ENCODE measurements at regions of chr9 and their contacts with region 1.

Region 1: GRCh38 chr9:4366591-4367330 is 66.9 kb upstream of the GLIS3 start:
- DNase-seq: peak; percentile 48
- ATAC-seq: no peak
- H3K4me3 Mint-ChIP-seq: no peak overlapping the region
- H3K27ac Mint-ChIP-seq: no peak overlapping the region
- H3K4me1 Mint-ChIP-seq: peaks cover 3% of the 10 kb centered on the region
- H3K27me3 Mint-ChIP-seq: peaks cover 2% of the 10 kb centered on the region
- CTCF ChIP-seq: peak; percentile 75

Region 2: GRCh38 chr9:3732077-3733038 is 634.4 kb before region 1 on chr9:
- CTCF ChIA-PET with region 1: interaction called, 14 read pairs
- POLR2A ChIA-PET with region 1: no interaction called
- intact Hi-C with region 1: loop called (anchors 10 kb)
- DNase-seq: peak; percentile 47
- ATAC-seq: peak; percentile 97
- H3K4me3 Mint-ChIP-seq: peak overlapping the region; percentile 28
- H3K27ac Mint-ChIP-seq: peak overlapping the region; percentile 23
- H3K4me1 Mint-ChIP-seq: peaks cover 22% of the 10 kb centered on the region
- H3K27me3 Mint-ChIP-seq: peaks cover 1% of the 10 kb centered on the region
- CTCF ChIP-seq: peak; percentile 71

Region 3: DNA sequence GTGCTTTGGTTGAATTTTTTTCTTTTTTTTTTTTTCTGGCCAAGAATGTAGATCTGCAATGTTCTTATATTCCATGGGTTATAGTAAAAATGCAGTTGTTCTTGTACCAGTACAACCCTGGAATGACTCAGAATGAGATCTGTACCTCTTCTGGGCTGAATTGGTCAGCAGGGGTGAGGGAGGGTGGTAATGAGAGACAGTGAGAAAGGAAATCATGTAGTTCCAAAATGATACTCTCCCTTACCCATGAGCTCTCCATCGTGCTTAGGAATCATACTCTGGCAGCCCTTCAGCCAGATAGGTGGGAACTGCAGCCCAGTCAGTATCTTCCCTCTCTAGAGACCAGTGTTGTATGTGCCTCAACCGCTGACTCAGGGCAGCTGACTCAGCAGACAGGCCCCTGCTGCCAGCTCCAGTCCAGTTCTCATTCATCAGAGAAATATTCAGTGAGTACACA is 64.8 kb before region 1 on chr9:
- CTCF ChIA-PET with region 1: interaction called, 11 read pairs
- POLR2A ChIA-PET with region 1: no interaction called
- intact Hi-C with region 1: no loop called
- DNase-seq: peak; percentile 31
- ATAC-seq: no peak
- H3K4me3 Mint-ChIP-seq: no peak overlapping the region
- H3K27ac Mint-ChIP-seq: no peak overlapping the region
- H3K4me1 Mint-ChIP-seq: peaks cover 55% of the 10 kb centered on the region
- H3K27me3 Mint-ChIP-seq: peaks cover 35% of the 10 kb centered on the region
- CTCF ChIP-seq: no peak

Region 4: GRCh38 chr9:4327504-4328191 is 39.1 kb before region 1 on chr9:
- CTCF ChIA-PET with region 1: interaction called, 13 read pairs
- POLR2A ChIA-PET with region 1: no interaction called
- intact Hi-C with region 1: no loop called
- DNase-seq: peak; percentile 19
- ATAC-seq: no peak
- H3K4me3 Mint-ChIP-seq: no peak overlapping the region
- H3K27ac Mint-ChIP-seq: no peak overlapping the region
- H3K4me1 Mint-ChIP-seq: peaks cover 33% of the 10 kb centered on the region
- H3K27me3 Mint-ChIP-seq: no peaks in the 10 kb centered on the region
- CTCF ChIP-seq: no peak

Region 5: GRCh38 chr9:4344946-4345345 is 21.8 kb before region 1 on chr9:
- CTCF ChIA-PET with region 1: interaction called, 43 read pairs
- POLR2A ChIA-PET with region 1: interaction called, 3 read pairs
- intact Hi-C with region 1: no loop called
- DNase-seq: peak; percentile 85
- ATAC-seq: peak; percentile 99
- H3K4me3 Mint-ChIP-seq: no peak overlapping the region
- H3K27ac Mint-ChIP-seq: no peak overlapping the region
- H3K4me1 Mint-ChIP-seq: peaks cover 16% of the 10 kb centered on the region
- H3K27me3 Mint-ChIP-seq: no peaks in the 10 kb centered on the region
- CTCF ChIP-seq: no peak

Measured in activated CD8-positive, alpha-beta T cell treated with anti-CD3 and anti-CD28 coated beads for 36 hours (primary cell).